Left cardiac atrium (tissue), 4 donors: ENCODE measurements at regions of chr5 and their contacts with region 1.

Region 1: DNA sequence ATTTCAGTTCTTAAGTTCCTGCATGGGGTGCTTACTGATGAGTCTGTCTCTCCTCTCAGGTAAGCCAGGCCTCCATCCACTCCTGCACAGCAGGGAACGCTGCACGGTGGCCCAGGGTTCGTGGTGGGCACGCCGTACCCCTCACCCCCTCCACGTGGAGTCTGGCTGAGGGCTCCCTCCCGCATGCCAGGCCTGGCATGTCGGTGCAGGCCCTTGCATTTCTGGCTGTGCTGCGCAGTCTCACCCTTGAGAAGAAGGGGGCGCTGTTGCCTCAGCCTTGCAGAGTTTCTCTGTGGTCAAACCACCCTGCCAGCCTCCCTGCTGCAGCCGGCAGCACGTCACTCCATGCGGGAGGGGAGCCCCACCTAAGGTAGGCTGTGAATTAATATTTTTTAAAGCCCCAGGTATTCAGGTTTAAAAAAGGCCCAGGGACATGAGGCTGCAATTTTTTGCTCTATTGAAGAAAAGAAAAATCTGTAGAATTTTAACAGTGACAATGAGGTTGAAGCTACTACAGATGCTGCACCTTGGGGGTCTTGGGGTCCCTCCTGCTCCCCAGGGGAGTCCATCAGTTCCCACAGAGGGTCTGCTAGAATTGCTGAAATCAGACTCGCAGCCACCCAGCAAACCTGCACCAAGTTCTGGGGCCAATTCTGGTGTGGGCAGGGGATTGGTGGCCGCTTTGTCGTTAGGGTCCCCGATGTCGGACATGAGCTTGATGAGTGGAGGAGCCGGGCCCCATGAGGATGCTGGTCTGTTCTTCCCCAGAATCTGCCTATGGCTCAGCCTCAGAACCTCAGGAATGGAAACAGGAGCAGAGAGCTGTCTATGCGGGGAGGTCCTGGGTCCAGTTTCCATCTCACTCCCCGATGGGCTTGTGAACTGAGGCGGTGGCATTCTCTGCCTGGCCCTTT is 52.6 kb downstream of the TENT4A start:
- DNase-seq: peak; percentile 79
- ATAC-seq: peak; percentile 73

Region 2: DNA sequence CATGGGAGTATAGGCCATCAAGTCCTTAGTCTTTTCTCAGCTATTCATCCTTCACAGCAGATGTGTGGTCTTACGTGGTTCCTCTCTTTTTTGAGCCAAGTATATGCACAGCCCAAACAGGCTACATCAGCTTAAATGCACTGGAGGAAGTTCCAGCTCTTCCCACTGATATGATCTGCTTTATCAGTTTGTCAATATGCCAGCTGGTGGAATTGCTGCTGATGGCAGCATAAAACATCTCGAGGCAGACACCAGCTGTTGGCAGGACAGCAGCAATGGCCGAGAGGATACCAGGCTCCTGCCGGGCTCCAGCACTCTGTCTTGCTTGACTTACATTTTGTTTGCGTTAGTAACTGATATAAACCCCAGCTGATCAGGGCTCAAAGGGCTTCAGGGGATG is 90.8 kb after region 1 on chr5:
- intact Hi-C with region 1: no loop called
- DNase-seq: no peak
- ATAC-seq: no peak

Region 3: GRCh38 chr5:7361593-7361992 is 595.7 kb after region 1 on chr5:
- intact Hi-C with region 1: no loop called
- DNase-seq: no peak
- ATAC-seq: no peak

Region 4: DNA sequence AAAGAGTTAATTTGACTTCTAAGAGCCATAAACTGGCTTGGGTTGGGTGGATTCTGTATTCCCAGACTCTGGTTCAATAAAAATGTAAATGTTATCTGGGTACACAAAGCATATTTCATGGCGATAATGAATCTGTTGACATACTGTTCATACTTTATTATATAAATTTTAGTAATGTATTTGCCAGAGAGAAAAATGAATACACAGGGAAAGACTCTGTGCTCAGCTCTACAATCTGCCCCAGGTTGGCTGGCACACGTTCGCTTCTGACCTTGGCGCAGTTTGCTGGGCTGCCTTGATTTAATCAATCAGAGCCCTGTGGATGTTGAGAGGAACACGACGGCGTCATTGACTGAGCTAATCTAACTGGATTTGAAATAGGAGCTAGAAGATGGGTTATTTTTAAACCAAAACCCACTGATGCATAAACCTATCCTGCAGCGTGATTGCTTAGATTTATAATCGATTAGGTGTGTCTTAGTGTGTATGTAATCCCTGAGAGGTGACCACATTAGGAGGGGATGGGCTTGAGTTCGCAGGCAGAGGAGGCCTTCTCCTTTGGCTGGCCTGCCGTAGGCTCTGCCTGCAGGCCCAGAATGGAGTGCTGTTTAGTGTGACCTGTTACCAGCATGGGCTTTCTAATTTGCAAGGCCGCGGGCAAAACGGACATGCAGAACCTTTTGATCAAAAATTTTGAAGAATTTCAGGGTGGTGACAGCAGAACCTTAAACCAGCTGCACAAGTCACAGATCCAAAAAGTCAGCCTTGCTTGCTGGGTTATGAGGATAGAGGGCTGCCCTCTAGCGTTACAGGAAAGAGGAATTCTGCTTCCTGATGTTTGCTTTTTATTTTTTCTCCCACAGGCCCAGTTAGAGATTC is 626.2 kb after region 1 on chr5:
- intact Hi-C with region 1: loop called in 1 of 2 experiments (anchors 5 kb)
- DNase-seq: no peak
- ATAC-seq: peak in 1 of 2 donors; percentile 35

Region 5: DNA sequence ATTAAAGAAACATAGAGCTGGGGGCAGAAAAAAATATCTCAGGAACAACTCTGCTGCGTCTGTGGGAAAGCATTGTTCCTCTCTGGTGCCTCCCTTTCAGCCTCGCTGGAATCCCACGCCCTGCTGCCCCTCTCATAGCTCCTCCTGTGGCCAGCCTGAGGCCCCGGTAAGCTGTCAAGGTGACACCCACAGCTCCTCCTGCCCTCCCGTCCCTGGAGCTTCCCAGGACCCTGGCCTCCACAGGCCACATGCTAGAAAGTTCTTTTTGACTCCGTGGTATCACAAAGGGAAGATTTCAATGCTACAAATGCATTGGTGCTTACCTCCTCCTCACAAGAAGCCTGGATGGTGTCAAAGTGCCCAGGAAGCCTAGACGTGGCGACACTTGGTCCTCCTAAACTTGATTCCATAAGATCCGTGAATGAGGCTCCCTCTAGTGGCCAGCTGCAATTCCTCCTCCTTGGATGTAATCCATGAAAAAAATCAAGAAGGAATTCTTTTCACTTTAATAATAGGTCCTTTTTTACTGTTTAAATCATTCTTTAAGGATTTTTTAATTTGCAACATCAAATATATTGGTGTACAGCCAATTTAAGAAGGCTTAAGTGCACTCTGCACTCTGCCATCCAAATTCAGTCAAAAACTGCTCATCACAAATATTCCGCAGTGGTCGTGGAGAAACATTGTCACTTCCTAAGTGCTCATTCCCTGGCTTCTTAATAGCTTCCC is 980.2 kb after region 1 on chr5:
- intact Hi-C with region 1: loop called in 1 of 2 experiments (anchors 5 kb)
- DNase-seq: peak; percentile 61
- ATAC-seq: peak in 1 of 2 donors; percentile 52

Region 6: GRCh38 chr5:7815892-7816534 is 1050.1 kb after region 1 on chr5:
- intact Hi-C with region 1: loop called in 1 of 2 experiments (anchors 5 kb)
- DNase-seq: peak; percentile 84
- ATAC-seq: peak; percentile 97 to 98

Region 7: DNA sequence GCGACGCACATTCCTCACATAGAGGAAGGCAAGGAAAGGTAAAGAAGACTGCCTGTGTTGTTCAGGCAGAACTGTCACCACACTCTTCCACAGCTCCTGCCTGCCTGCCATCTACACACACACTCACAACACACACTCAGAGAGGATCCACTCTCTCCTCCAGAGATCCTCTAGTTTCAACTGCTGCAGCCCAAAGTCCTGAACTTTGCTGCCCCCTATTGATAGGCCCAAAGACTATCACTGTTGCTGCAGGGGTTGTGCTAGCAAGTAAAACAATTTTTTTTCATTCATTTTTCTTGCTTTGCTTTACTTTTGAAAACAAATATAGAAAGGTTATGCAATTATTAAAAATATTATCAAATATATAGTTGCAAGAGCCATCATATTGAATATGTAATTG is 1091.0 kb after region 1 on chr5:
- intact Hi-C with region 1: loop called in 1 of 2 experiments (anchors 10 kb)
- DNase-seq: no peak
- ATAC-seq: peak in 1 of 2 donors; percentile 73